ENCODE measurements at regions of chr10 and their contacts with region 1.

Region 1: DNA sequence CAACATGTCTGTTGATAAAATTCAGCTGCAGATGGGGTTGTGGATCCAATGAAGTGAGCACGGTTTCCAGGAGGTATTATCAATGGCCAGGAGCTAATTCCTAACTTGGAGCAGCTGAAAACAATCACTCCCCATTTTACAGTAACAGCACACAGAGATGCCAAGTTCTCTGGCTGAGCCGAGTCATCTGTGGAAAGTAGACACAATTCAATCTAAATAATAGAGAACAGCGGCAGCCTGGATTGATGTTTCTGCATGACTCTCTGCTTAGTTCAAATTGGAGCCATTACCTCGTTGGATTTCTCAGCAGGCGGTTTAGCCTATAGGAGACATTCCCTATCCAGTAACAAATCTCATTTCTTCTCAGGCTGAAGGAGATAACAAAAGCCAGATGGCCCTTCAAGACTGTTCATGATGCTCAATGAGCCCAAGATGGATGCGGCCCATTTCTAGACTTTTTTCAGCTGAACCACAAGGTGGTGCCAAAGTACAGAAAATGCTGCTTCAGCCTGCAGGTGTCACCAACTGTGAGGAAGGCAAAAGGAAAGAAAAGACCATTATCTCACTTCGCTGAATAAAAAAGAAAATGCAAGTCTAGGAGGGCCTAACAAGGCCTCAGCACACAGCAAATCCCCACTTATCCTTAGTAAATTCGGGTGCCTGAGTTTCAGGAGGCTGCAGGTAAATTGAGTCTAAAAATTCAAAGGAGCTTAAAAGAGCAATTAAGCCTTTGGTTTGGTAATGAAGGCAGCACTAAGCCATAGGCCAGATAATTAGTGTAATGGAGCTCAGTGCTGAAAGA is 83.7 kb downstream of the SLC16A9 start:
- DNase-seq: peak; percentile 59
- ATAC-seq: peak; percentile 82
- H3K4me3 Mint-ChIP-seq: no peak overlapping the region
- H3K27ac Mint-ChIP-seq: no peak overlapping the region
- H3K4me1 Mint-ChIP-seq: peaks cover 2% of the 10 kb centered on the region
- H3K27me3 Mint-ChIP-seq: no peaks in the 10 kb centered on the region

Region 2: GRCh38 chr10:58781873-58782488 is 843.9 kb before region 1 on chr10:
- CTCF ChIA-PET with region 1: no interaction called
- POLR2A ChIA-PET with region 1: no interaction called
- intact Hi-C with region 1: loop called (anchors 1 to 2 kb)
- DNase-seq: no peak
- ATAC-seq: no peak
- H3K4me3 Mint-ChIP-seq: no peak overlapping the region
- H3K27ac Mint-ChIP-seq: no peak overlapping the region
- H3K4me1 Mint-ChIP-seq: no peaks in the 10 kb centered on the region
- H3K27me3 Mint-ChIP-seq: peaks cover 7% of the 10 kb centered on the region

Region 3: DNA sequence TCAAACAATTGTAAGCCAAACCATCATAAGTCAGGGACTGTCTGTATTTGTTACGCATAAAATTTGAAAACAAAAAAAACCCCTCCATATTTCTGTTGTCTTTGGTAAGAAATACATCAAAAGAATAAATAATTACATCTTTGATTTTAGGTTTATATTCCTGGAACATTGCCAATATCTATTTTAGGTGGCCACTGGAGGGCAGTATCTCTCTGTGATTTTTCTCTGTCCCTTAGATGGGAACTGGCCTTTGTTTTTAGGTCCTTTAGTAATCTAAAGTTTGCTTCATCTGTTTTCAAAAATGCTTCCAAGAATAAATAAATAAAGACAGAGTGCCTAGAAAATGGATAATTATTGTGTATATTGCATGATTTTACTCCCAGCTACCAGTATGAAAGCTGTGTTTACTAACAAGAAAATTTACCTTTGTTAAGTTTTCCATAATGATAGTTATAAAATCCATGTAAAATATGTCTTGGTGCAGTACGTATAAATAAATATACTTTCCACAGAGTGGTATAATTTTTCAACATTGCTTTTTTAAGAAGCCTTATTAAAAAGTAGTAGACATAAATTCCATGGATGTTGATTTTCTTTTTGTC is 385.2 kb before region 1 on chr10:
- CTCF ChIA-PET with region 1: interaction called, 3 read pairs
- POLR2A ChIA-PET with region 1: no interaction called
- intact Hi-C with region 1: loop called (anchors 1 to 2 kb)
- DNase-seq: peak; percentile 4
- ATAC-seq: no peak
- H3K4me3 Mint-ChIP-seq: no peak overlapping the region
- H3K27ac Mint-ChIP-seq: no peak overlapping the region
- H3K4me1 Mint-ChIP-seq: no peaks in the 10 kb centered on the region
- H3K27me3 Mint-ChIP-seq: peaks cover 5% of the 10 kb centered on the region

Region 4: GRCh38 chr10:60032723-60033122 is 406.8 kb after region 1 on chr10:
- CTCF ChIA-PET with region 1: interaction called, 37 read pairs
- POLR2A ChIA-PET with region 1: no interaction called
- intact Hi-C with region 1: loop called (anchors 1 kb)
- DNase-seq: peak; percentile 74
- ATAC-seq: peak; percentile 63
- H3K4me3 Mint-ChIP-seq: no peak overlapping the region
- H3K27ac Mint-ChIP-seq: no peak overlapping the region
- H3K4me1 Mint-ChIP-seq: peaks cover 9% of the 10 kb centered on the region
- H3K27me3 Mint-ChIP-seq: no peaks in the 10 kb centered on the region

Region 5: GRCh38 chr10:60434418-60435046 is 808.6 kb after region 1 on chr10:
- CTCF ChIA-PET with region 1: no interaction called
- POLR2A ChIA-PET with region 1: no interaction called
- intact Hi-C with region 1: loop called (anchors 1 to 5 kb)
- DNase-seq: peak; percentile 17
- ATAC-seq: no peak
- H3K4me3 Mint-ChIP-seq: no peak overlapping the region
- H3K27ac Mint-ChIP-seq: no peak overlapping the region
- H3K4me1 Mint-ChIP-seq: peaks cover 6% of the 10 kb centered on the region
- H3K27me3 Mint-ChIP-seq: no peaks in the 10 kb centered on the region